Dorsolateral prefrontal cortex (tissue), 120 donors: ENCODE measurements at regions of chr16 and their contacts with region 1.

Region 1: DNA sequence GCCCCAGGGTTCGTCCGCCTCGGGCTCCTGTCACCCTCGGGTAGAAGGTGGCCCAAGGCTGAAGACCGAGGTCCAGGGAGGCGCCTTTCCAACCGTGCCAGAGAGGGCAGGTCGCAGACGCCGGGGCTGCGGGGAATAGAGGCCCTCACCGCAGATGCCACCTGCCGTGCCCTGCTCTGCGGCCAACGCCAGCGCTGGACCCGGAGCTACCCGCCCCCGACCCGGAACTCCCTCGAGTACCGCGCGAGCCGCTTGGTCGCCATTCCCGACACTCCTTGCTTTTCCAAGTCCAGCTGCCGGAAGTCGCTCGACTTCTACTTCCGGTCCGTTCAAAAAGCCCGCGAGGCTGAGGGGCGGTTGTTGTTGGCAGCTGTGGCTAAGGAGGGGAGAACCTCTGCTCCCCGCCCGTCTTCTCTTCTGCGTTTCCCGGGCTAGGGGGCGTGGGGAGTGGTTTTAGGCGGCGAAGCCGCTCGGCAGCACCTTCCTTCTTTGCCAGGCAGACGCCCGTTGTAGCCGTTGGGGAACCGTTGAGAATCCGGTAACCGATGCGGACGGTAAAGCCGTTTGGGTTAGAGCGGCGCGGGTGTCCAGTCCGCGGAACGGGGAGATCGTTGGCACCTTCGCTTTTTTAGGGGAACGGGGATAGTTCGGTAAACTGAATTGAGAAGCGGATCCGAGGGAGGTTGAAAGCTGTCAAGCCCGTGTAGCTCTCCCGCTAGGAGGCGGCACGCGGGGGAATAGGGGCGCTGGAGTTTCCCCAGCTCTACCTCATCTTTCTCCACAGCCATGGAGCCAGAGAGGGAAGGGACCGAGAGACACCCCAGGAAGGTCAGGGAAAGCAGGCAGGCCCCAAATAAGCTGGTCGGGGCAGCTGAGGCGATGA is at the starts of genes ERI2 and REXO5:
- DNase-seq: peak; percentile 83 to 94 (median 90)
- H3K4me3 ChIP-seq: peak within 1 kb of the TSS; percentile 60 to 99 (median 90)
- H3K27ac ChIP-seq: peak within 1 kb of the TSS; percentile 31 to 94 (median 85)
- H3K27me3 ChIP-seq: no peaks in the 10 kb centered on the region
- CTCF ChIP-seq: peak in 46 of 56 donors; percentile 7 to 63 (median 41)
- total RNA-seq, gene ERI2: 10.9 to 36.9 (median 19.8) TPM
- total RNA-seq, gene REXO5: 1.6 to 9.0 (median 4.8) TPM

Region 2: GRCh38 chr16:20741554-20742285 is 64.7 kb before region 1 on chr16 and contains the start of gene THUMPD1:
- intact Hi-C with region 1: loop called in 1 of 2 experiments (anchors 5 kb)
- DNase-seq: peak; percentile 93 to 98 (median 95)
- H3K4me3 ChIP-seq: peak within 1 kb of the TSS; percentile 54 to 100 (median 96)
- H3K27ac ChIP-seq: peak within 1 kb of the TSS; percentile 54 to 99 (median 96)
- H3K27me3 ChIP-seq: no peaks in the 10 kb centered on the region
- CTCF ChIP-seq: peak in 27 of 56 donors; percentile 6 to 46 (median 23)
- total RNA-seq, gene THUMPD1: 24.8 to 46.6 (median 37.8) TPM

Region 3: GRCh38 chr16:20900299-20901067 is 94.1 kb after region 1 on chr16 and contains the starts of genes DCUN1D3 and LYRM1:
- intact Hi-C with region 1: loop called in 1 of 2 experiments (anchors 5 kb)
- DNase-seq: peak; percentile 88 to 98 (median 96)
- H3K4me3 ChIP-seq: peak within 1 kb of the TSS; percentile 70 to 98 (median 89)
- H3K27ac ChIP-seq: peak within 1 kb of the TSS; percentile 82 to 99 (median 97)
- H3K27me3 ChIP-seq: no peaks in the 10 kb centered on the region
- CTCF ChIP-seq: peak in 3 of 56 donors; percentile 7 to 9 (median 9)
- total RNA-seq, gene DCUN1D3: 9.7 to 23.3 (median 14.8) TPM
- total RNA-seq, gene LYRM1: 15.4 to 38.4 (median 24.8) TPM

Region 4: GRCh38 chr16:21083729-21084268 is 277.4 kb after region 1 on chr16:
- intact Hi-C with region 1: loop called in 1 of 2 experiments (anchors 5 kb)
- DNase-seq: peak in 8 of 10 donors; percentile 26 to 63 (median 36)
- H3K4me3 ChIP-seq: no peak overlapping the region
- H3K27ac ChIP-seq: no peak overlapping the region
- H3K27me3 ChIP-seq: no peaks in the 10 kb centered on the region
- CTCF ChIP-seq: peak; percentile 41 to 81 (median 71)